MCF 10A (cell line): ENCODE measurements at regions of chr11 and their contacts with region 1.

Region 1: DNA sequence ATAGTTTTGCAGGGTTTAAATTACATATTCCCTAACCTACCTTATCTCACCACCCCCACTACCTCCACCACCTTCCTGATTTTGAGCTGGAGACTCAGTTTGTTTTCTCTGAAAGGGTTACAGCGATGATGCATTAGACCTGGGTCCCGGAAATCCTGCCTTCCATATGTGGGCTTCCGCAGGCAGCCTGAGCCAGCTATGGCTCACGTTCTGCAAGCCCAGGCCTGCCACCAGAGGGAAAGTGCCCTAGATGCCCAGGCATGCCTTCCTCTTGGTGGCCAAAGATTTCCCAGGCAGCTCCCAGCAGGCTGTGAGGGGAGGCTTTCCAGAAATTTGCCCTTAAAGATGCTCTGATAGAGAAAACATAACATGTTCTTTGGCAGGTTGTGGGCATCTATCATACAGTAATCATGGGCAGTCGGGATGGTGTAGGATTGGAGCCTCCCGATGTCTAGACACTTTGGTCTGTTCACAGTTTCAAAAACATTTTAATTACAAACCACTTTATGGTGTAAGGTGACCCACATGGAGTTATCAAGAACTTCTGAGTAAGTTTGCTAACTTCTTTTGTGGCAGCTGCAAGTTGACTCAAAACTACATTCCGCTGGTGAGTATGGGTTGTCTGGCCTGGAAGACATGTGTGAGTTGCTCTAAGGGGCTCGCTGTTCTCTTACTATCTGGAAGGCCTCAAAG is 79.3 kb downstream of the MICAL2 start:
- DNase-seq: peak; percentile 93
- H3K4me3 Mint-ChIP-seq: peak overlapping the region; percentile 28
- H3K27ac Mint-ChIP-seq: peak overlapping the region; percentile 85
- H3K4me1 Mint-ChIP-seq: peaks cover 38% of the 10 kb centered on the region
- H3K27me3 Mint-ChIP-seq: no peaks in the 10 kb centered on the region
- CTCF ChIP-seq: peak; percentile 30

Region 2: GRCh38 chr11:12066799-12067508 is 122.7 kb before region 1 on chr11:
- CTCF ChIA-PET with region 1: interaction called, 3 read pairs
- POLR2A ChIA-PET with region 1: interaction called, 24 read pairs
- intact Hi-C with region 1: no loop called
- DNase-seq: peak; percentile 82
- H3K4me3 Mint-ChIP-seq: peak overlapping the region; percentile 49
- H3K27ac Mint-ChIP-seq: peak overlapping the region; percentile 95
- H3K4me1 Mint-ChIP-seq: peaks cover 53% of the 10 kb centered on the region
- H3K27me3 Mint-ChIP-seq: no peaks in the 10 kb centered on the region
- CTCF ChIP-seq: no peak

Region 3: DNA sequence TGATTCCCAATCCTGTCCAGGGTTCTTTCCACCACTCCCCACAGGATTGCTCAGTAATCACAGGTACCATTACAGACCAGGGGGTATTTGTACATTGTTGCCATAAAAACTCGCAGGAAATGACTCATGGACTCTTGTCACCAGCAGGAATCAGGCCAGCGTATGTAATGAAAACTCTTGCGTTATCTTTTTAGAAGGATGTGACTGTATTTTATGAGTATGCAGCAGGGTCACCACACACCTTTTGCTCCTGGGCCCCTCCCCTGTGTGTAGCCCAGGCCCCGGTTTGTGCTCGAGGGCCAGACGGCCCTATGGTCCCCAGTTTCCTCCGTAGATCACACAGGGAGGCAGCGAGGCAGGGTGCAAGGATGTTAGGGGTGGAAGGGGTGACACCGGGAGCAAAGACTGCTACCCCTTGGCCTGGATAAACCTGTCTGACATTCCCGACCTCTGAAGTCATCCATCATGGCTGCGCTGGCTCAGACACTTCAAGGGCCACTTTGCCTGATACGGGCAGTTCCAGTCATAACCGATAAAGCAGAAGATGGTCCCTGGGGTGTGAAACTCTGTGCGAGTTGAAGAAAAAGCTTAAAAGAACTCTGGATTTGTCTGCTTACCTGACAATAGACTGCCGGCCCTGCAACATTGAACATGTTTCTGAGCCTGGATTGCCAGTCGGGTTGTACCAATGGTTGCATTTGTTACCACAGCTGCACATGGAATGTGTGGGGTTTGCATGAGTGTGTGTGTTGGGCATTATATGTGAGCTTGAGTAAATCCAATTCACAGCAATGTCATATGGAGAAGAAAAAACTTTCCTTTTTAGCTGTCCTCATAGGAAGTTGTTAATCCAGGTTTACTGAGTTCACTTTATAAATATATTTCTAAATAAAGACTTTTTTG is 22.3 kb before region 1 on chr11:
- CTCF ChIA-PET with region 1: no interaction called
- POLR2A ChIA-PET with region 1: interaction called, 27 read pairs
- intact Hi-C with region 1: loop called (anchors 1 kb)
- DNase-seq: peak; percentile 93
- H3K4me3 Mint-ChIP-seq: no peak overlapping the region
- H3K27ac Mint-ChIP-seq: peak overlapping the region; percentile 8
- H3K4me1 Mint-ChIP-seq: peaks cover 49% of the 10 kb centered on the region
- H3K27me3 Mint-ChIP-seq: no peaks in the 10 kb centered on the region
- CTCF ChIP-seq: no peak

Region 4: DNA sequence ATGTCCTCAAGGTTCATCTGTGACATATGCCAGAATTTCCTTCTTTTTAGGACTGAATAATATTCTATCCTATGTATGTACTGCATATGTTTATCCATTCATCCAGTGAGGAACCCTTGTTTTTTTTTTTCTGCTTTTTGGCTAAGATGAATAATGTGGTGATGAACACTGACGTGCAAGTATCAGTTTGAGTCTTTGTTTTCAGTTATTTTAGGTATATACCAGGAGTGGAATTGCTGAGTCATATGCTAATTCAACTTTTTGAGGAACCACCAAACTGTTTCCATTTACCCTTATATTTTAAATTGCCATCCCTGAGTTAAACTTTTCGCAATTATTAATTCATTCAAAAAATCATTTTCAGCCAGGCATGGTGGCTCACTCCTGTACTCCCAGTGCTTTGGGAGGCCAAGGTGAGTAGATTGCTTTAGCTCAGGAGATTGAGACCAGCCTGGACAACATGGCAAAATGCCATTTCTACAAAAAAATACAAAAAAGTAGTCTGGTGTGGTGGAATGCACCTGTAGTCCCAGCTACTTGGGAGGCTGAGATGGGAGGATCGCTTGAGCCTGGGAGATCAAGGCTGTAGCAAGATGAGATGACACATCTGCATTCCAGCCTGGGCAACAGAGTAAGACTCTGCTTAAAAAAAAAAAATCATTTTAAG is 15.1 kb before region 1 on chr11:
- CTCF ChIA-PET with region 1: interaction called, 5 read pairs
- POLR2A ChIA-PET with region 1: interaction called, 95 read pairs
- intact Hi-C with region 1: no loop called
- DNase-seq: peak; percentile 53
- H3K4me3 Mint-ChIP-seq: no peak overlapping the region
- H3K27ac Mint-ChIP-seq: peak overlapping the region; percentile 76
- H3K4me1 Mint-ChIP-seq: peaks cover 41% of the 10 kb centered on the region
- H3K27me3 Mint-ChIP-seq: no peaks in the 10 kb centered on the region
- CTCF ChIP-seq: no peak

Region 5: DNA sequence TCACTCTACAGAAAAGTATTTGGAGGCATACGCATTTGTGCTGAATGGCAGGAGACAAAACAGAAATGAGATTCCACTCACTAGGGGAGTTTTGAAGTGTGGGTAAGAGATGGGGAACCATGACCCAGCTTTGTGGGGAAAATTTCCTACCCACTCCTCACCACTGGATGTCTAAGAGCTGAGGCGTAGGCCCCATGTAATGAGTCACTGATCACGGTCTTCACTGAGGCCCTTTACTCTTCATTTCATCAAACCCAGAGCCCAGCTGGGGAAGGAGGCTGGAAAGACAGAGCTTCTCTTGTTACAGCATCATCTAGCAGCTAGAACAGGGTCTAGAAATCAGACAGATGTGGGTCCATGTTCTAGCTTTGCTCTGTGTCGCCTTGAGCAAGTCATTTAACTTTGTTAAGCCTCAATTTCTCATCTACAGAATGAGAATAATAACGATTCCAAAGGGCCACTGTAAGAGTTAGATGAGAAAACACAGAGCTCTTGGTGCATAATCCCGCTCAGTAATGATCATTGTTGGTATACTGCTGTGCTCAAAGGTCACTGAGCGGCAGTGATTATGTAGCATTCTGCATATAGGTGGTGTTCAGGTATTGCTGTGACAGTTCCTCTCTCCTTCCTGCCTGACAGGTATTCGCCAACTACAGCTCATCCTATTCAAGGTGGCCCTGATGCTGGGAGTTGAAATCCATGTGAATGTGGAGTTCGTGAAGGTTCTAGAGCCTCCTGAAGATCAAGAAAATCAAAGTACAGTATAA is 17.9 kb after region 1 on chr11:
- CTCF ChIA-PET with region 1: interaction called, 3 read pairs
- POLR2A ChIA-PET with region 1: interaction called, 11 read pairs
- intact Hi-C with region 1: no loop called
- DNase-seq: no peak
- H3K4me3 Mint-ChIP-seq: no peak overlapping the region
- H3K27ac Mint-ChIP-seq: peak overlapping the region; percentile 32
- H3K4me1 Mint-ChIP-seq: peaks cover 9% of the 10 kb centered on the region
- H3K27me3 Mint-ChIP-seq: no peaks in the 10 kb centered on the region
- CTCF ChIP-seq: no peak